Activated CD4-positive, alpha-beta T cell treated with anti-CD3 and anti-CD28 coated beads for 36 hours (primary cell): ENCODE measurements at regions of chr5 and their contacts with region 1.

Region 1: GRCh38 chr5:140557136-140557805 is at the start of gene SRA1:
- DNase-seq: peak; percentile 92
- ATAC-seq: peak; percentile 83
- H3K4me3 Mint-ChIP-seq: peak within 1 kb of the TSS; percentile 89
- H3K27ac Mint-ChIP-seq: peak within 1 kb of the TSS; percentile 93
- H3K4me1 Mint-ChIP-seq: peaks cover 45% of the 10 kb centered on the region
- H3K27me3 Mint-ChIP-seq: no peaks in the 10 kb centered on the region
- total RNA-seq, gene SRA1: 33.2 to 47.3 TPM

Region 2: GRCh38 chr5:140113699-140114263 is 443.5 kb before region 1 on chr5 and contains the start of gene PURA:
- CTCF ChIA-PET with region 1: no interaction called
- POLR2A ChIA-PET with region 1: no interaction called
- intact Hi-C with region 1: loop called in 1 of 2 experiments (anchors 5 kb)
- DNase-seq: peak; percentile 98
- ATAC-seq: peak; percentile 92
- H3K4me3 Mint-ChIP-seq: peak within 1 kb of the TSS; percentile 89
- H3K27ac Mint-ChIP-seq: peak within 1 kb of the TSS; percentile 84
- H3K4me1 Mint-ChIP-seq: peaks cover 65% of the 10 kb centered on the region
- H3K27me3 Mint-ChIP-seq: peaks cover 3% of the 10 kb centered on the region
- total RNA-seq, gene PURA: 9.5 to 10.7 TPM

Region 3: DNA sequence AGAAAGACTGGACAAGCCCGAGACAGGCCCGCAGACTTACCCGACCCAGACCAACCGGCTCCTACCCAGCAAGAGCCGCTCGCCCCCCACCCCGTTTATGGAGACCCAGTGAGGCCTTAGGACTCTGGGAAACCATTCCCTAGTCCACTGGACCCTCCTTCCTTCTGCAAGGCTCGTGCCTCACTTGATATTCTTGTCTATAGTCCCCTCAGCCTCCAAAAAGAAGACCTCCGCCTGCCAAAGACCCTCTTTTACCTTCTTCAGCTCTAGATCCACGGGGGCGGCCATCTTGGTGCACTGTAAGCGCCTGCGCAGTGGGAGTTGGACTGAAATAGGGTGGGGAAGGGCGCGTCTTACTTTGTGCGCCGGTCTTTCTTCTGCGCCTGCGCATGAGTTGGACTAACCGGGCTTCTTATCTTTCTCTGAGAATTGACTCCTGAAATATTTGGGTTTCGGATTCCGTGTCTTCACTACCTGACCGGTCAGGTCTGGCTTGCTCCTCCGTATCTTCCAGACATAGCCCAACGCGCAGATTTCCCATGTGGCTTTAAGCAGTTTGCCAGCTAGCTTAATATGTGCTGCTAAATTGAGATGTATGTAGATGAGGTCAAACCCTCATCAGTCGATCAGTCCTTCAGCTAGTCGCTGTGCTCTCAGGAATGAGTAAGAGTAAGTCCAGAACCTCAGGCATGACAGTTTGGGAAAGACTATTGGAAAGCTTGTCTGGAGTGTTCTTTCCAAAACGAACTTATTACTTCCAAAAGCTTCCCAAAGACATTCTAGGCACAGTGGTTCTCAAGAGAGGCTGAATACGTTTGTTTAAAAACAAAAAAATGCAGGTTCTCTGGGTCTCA is 254.3 kb before region 1 on chr5 and contains the start of gene PFDN1:
- CTCF ChIA-PET with region 1: no interaction called
- POLR2A ChIA-PET with region 1: no interaction called
- intact Hi-C with region 1: loop called in 1 of 2 experiments (anchors 5 kb)
- DNase-seq: peak; percentile 96
- ATAC-seq: peak; percentile 99
- H3K4me3 Mint-ChIP-seq: peak within 1 kb of the TSS; percentile 91
- H3K27ac Mint-ChIP-seq: peak within 1 kb of the TSS; percentile 91
- H3K4me1 Mint-ChIP-seq: peaks cover 29% of the 10 kb centered on the region
- H3K27me3 Mint-ChIP-seq: peaks cover 4% of the 10 kb centered on the region
- total RNA-seq, gene PFDN1: 52.6 to 63.2 TPM

Region 4: DNA sequence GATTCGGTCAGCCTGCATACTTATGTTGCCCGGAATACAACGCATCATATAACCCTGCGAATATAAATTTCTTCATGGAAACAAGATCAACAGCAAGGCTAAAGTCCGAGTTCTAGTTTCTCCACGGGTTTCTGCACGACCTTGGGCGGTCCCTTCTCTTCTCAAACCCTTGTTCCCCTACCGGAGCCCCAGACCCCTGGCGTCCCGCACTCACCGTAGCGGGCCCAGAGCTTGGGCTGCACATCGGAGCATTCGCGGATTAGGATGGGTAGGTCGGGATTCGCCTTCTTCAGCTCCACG is 89.7 kb after region 1 on chr5:
- CTCF ChIA-PET with region 1: interaction called, 5 read pairs
- POLR2A ChIA-PET with region 1: interaction called, 8 read pairs
- intact Hi-C with region 1: loop called in 1 of 2 experiments (anchors 2 kb)
- DNase-seq: no peak
- ATAC-seq: peak; percentile 14
- H3K4me3 Mint-ChIP-seq: peak overlapping the region; percentile 97
- H3K27ac Mint-ChIP-seq: peak overlapping the region; percentile 98
- H3K4me1 Mint-ChIP-seq: peaks cover 27% of the 10 kb centered on the region
- H3K27me3 Mint-ChIP-seq: no peaks in the 10 kb centered on the region

Region 5: DNA sequence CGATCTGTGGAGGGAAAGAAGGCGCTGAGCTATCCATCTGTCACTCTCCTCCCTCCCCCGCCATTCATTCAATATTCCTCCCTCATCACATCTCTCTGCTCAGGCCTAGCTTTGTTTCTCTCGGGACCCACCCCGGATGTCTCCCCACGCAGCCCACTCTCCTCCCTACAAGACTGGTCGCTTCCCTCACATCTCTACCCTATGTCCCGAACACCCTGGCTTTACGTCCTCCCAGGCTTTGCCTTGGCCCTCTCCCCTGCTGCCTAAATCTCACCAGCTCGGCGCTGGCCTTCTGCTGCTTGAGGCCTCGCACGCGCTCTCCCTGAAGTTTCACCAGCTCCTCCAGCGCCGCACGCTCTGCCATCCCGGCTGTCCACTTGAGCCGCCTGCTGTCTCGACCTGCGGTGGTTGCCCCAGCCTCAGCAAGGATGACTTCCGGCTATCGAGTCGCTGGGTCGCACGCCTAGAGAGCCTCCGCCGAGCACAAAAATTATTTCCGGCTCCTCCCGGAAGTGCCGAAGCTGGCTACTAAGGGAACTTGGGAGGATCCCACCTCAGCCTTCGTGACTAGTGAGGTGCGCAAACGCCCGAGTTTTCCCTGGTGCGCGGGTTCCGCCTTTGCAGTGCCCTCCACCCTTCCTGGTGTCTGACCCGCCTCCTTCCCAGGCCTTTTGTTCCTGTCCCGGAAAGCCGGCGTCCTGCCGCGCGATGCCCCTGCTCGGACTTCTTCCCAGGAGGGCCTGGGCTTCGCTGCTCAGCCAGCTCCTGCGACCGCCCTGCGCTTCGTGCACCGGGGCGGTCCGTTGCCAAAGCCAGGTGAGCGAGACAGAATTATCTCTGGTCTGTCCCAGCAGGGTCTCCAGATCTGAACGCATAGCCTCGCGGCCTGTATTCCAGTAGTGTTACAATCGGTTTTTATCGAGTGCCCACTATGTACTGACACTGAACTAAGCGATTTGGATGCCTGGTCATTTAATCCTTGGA is 134.0 kb after region 1 on chr5 and contains the starts of genes HARS1 and HARS2:
- CTCF ChIA-PET with region 1: interaction called, 3 read pairs
- POLR2A ChIA-PET with region 1: no interaction called
- intact Hi-C with region 1: loop called in 1 of 2 experiments (anchors 1 kb)
- DNase-seq: peak; percentile 91
- ATAC-seq: peak; percentile 95
- H3K4me3 Mint-ChIP-seq: peak within 1 kb of the TSS; percentile 97
- H3K27ac Mint-ChIP-seq: peak within 1 kb of the TSS; percentile 98
- H3K4me1 Mint-ChIP-seq: peaks cover 41% of the 10 kb centered on the region
- H3K27me3 Mint-ChIP-seq: no peaks in the 10 kb centered on the region
- total RNA-seq, gene HARS1: 83.3 to 91.0 TPM
- total RNA-seq, gene HARS2: 20.9 to 28.1 TPM

Region 6: GRCh38 chr5:141618804-141619554 is 1061.7 kb after region 1 on chr5 and contains the start of gene DIAPH1:
- CTCF ChIA-PET with region 1: no interaction called
- POLR2A ChIA-PET with region 1: no interaction called
- intact Hi-C with region 1: loop called (anchors 10 kb)
- DNase-seq: peak; percentile 99
- ATAC-seq: peak; percentile 88
- H3K4me3 Mint-ChIP-seq: peak within 1 kb of the TSS; percentile 98
- H3K27ac Mint-ChIP-seq: peak within 1 kb of the TSS; percentile 98
- H3K4me1 Mint-ChIP-seq: peaks cover 64% of the 10 kb centered on the region
- H3K27me3 Mint-ChIP-seq: no peaks in the 10 kb centered on the region
- total RNA-seq, gene DIAPH1: 185 to 212 TPM